AG04449 (cell line): ENCODE measurements at regions of chrX and their contacts with region 1.

Region 1: DNA sequence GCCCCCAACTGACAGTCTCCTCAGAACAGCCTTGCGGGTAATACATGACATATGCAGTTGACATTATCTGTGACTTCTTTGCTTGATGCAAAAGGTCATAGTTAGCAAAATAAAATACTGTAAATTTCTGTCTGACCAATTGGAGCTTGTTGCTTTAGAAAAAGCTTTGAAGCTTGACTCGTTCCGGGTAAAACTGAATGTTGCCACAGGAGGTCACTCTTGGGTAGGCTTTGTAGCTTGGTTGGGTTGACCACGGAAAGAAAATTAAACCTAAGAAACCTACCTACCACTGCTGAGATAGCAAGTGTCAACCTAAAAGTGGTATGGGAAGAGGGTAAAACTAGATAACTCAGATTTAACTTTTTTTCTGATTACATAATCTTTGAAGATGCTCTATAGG is 23.2 kb downstream of the PRPS2 start:
- DNase-seq: no peak
- H3K4me3 ChIP-seq: no peak overlapping the region
- CTCF ChIP-seq: peak; percentile 28

Region 2: GRCh38 chrX:12825801-12826200 is 11.4 kb after region 1 on chrX:
- CTCF ChIA-PET with region 1: interaction called, 11 read pairs
- POLR2A ChIA-PET with region 1: no interaction called
- DNase-seq: no peak
- H3K4me3 ChIP-seq: no peak overlapping the region
- CTCF ChIP-seq: no peak

Region 3: GRCh38 chrX:12894074-12895030 is 79.9 kb after region 1 on chrX:
- CTCF ChIA-PET with region 1: interaction called, 10 read pairs
- POLR2A ChIA-PET with region 1: no interaction called
- DNase-seq: no peak
- H3K4me3 ChIP-seq: no peak overlapping the region
- CTCF ChIP-seq: peak; percentile 26

Region 4: DNA sequence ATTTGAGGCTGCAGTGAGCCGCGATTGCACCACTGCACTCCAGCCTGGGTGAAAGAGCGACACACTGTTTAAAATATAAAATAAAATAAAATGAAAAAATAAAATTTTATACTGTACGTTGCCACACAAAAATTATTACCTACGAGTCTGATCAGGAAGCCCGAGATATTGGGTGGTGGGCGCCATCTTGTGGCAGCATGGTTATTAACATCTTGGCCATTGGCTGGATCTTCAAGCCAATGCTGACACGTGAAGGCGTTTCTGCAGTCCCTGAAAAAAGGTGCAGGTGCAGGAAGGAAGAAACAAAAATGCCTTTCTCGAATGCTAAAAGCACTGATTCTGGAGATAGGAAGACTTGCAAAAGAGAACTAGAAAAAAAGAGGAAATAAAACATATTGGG is 87.1 kb after region 1 on chrX:
- CTCF ChIA-PET with region 1: interaction called, 38 read pairs
- POLR2A ChIA-PET with region 1: no interaction called
- DNase-seq: no peak
- H3K4me3 ChIP-seq: no peak overlapping the region
- CTCF ChIP-seq: peak; percentile 53

Region 5: DNA sequence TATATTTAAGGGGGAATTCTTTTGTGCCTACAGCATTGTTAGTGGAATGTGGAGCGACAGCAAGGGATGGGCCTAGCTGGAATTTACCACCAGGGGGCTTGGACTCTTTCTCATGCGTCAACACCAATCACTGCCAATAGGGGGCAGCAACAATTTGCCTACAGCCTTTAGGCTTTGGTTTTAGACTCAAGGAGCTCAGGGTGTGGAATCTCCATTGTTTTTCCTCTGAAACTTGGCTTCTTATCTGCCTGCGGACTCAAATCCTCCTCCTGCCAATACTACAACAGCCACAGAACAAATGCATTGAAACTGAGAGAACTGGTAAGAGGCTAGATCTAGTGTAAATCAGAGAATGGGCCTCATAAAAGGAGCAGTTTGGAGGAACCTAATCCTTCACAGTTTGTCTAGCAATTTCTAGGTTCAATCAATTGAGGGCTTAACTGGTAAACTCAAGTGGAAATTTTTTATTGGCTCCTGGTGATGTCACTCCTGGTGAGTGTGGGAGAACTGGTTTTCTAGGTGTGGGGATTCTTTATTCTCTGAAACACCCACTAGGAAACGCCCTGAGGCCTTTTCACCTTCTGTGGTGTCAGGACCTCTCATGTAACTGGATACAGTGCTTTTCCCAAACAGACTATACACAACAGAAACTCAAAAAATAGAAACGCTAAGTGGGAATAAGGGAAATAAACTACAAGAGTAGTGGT is 132.6 kb after region 1 on chrX:
- CTCF ChIA-PET with region 1: interaction called, 13 read pairs
- POLR2A ChIA-PET with region 1: no interaction called
- DNase-seq: peak; percentile 47
- H3K4me3 ChIP-seq: no peak overlapping the region
- CTCF ChIP-seq: peak; percentile 89

Region 6: DNA sequence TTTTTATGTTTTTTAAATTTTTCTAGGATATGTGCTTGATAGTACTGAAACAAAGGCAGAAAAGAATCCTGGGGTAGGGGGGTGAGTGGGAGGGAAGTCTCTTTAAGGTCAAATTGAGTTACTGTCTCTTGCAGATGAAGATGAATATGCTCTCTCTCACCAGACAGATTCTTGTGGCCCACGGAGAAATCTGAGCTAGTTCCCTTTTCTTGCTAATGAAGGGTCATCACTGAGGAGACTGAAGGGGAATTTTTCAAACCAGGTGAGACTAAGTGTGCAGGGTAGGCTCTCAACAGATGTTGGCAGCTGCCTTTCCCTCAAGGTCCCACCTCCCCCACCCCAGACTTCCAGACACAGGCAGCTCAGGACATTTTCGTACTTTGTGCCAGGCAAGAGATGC is 208.5 kb after region 1 on chrX:
- CTCF ChIA-PET with region 1: no interaction called
- POLR2A ChIA-PET with region 1: no interaction called
- DNase-seq: no peak
- H3K4me3 ChIP-seq: no peak overlapping the region
- CTCF ChIP-seq: no peak

Region 7: DNA sequence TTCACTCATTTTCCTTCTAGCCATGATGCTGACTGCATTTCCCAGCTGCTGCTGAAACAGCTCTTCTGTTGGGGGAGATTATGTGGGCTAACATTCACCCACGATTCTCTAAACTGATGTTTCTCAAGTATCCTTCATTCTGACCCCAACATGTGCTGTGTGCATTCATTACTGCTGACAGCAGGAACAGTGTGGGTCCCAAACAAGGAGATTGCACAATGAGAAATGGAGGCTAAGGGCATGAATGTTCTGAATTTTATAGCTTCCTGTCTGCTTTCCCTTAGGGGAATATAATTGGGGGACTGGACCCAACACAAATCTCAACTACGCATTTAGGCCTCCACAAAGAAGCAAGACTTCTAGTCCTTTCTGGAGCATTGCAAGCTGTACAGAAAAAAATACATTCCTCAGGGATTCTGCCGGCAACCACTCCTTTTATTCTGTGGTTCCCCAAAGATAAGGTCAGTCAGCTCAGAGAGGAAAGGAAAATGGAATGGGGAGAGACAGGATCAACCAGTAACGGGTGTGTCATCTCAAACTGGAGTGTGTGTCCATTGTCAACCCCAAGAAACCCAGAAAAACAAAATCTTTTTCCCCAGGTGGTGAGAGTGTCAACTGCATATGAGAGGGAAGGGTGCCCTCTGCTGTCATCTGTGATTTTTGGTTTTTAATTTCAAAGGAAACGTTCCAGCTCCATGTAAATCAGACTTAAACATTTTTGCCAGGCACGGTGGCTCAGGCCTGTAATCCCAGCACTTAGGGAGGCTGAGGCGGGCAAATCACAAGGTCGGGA is 673.5 kb after region 1 on chrX:
- CTCF ChIA-PET with region 1: interaction called, 11 read pairs
- POLR2A ChIA-PET with region 1: no interaction called
- DNase-seq: peak; percentile 80
- H3K4me3 ChIP-seq: no peak overlapping the region
- CTCF ChIP-seq: peak; percentile 26